ENCODE measurements at regions of chr5 and their contacts with region 1.

Region 1: GRCh38 chr5:76425928-76426804 is 23.1 kb downstream of the IQGAP2 start:
- DNase-seq: no peak
- H3K4me3 ChIP-seq: peak overlapping the region in 1 of 7 experiments; percentile 35
- H3K27ac ChIP-seq: peak overlapping the region in 1 of 2 experiments; percentile 49
- H3K4me1 ChIP-seq: peaks cover 11 to 59% (median 50%) of the 10 kb centered on the region in 4 experiments
- H3K27me3 ChIP-seq: no peaks in the 10 kb centered on the region

Region 2: GRCh38 chr5:76413746-76414145 is 12.4 kb before region 1 on chr5:
- CTCF ChIA-PET with region 1: interaction called, 14 read pairs
- POLR2A ChIA-PET with region 1: interaction called, 7 read pairs
- DNase-seq: no peak
- H3K4me3 ChIP-seq: no peak overlapping the region
- H3K27ac ChIP-seq: peak overlapping the region in 1 of 2 experiments; percentile 30
- H3K4me1 ChIP-seq: peaks cover 7 to 59% (median 31%) of the 10 kb centered on the region in 4 experiments
- H3K27me3 ChIP-seq: no peaks in the 10 kb centered on the region

Region 3: GRCh38 chr5:76544268-76544926 is 118.2 kb after region 1 on chr5:
- CTCF ChIA-PET with region 1: interaction called, 13 read pairs
- POLR2A ChIA-PET with region 1: interaction called, 3 read pairs
- DNase-seq: peak; percentile 83 to 88 (median 88)
- H3K4me3 ChIP-seq: peak overlapping the region in 5 of 7 experiments; percentile 11 to 62 (median 51)
- H3K27ac ChIP-seq: peak overlapping the region; percentile 90 to 93
- H3K4me1 ChIP-seq: peaks cover 53 to 100% (median 89%) of the 10 kb centered on the region in 4 experiments
- H3K27me3 ChIP-seq: no peaks in the 10 kb centered on the region

Region 4: DNA sequence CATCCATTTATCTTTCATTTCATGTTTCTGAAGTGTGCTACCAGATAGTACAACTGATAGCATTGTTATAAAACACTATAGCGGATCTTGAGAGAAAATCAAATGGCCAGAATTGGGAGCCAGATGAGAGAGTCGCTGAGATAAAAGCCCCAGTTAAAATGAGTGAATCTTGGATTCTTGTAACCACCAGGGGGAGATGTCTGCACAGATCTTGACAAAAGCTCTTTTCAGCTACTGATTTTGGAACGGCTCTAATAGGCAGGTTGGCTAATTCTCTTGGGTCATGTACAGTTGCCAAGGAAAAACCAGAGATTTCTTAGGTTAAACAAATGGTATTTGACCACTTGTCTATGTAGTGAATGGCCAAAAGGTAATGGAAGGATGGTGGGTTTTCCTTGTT is 175.3 kb after region 1 on chr5:
- CTCF ChIA-PET with region 1: no interaction called
- POLR2A ChIA-PET with region 1: no interaction called
- DNase-seq: peak; percentile 68 to 81 (median 80)
- H3K4me3 ChIP-seq: no peak overlapping the region
- H3K27ac ChIP-seq: no peak overlapping the region
- H3K4me1 ChIP-seq: peaks cover 0 to 2% (median 0%) of the 10 kb centered on the region in 4 experiments
- H3K27me3 ChIP-seq: no peaks in the 10 kb centered on the region